ENCODE measurements at regions of chr14 and their contacts with region 1.

Region 1: GRCh38 chr14:44701563-44702263 is 194.6 kb upstream of the FSCB start:
- DNase-seq: peak; percentile 72
- ATAC-seq: peak; percentile 58
- H3K4me3 ChIP-seq: no peak overlapping the region
- H3K27ac ChIP-seq: no peak overlapping the region
- H3K4me1 ChIP-seq: peaks cover 27% of the 10 kb centered on the region
- H3K27me3 ChIP-seq: no peaks in the 10 kb centered on the region
- CTCF ChIP-seq: no peak

Region 2: GRCh38 chr14:44720707-44721106 is 19.0 kb after region 1 on chr14:
- CTCF ChIA-PET with region 1: no interaction called
- POLR2A ChIA-PET with region 1: interaction called, 3 read pairs
- intact Hi-C with region 1: loop called (anchors 2 kb)
- DNase-seq: peak; percentile 45
- ATAC-seq: peak; percentile 70
- H3K4me3 ChIP-seq: no peak overlapping the region
- H3K27ac ChIP-seq: no peak overlapping the region
- H3K4me1 ChIP-seq: no peaks in the 10 kb centered on the region
- H3K27me3 ChIP-seq: no peaks in the 10 kb centered on the region
- CTCF ChIP-seq: no peak

Region 3: DNA sequence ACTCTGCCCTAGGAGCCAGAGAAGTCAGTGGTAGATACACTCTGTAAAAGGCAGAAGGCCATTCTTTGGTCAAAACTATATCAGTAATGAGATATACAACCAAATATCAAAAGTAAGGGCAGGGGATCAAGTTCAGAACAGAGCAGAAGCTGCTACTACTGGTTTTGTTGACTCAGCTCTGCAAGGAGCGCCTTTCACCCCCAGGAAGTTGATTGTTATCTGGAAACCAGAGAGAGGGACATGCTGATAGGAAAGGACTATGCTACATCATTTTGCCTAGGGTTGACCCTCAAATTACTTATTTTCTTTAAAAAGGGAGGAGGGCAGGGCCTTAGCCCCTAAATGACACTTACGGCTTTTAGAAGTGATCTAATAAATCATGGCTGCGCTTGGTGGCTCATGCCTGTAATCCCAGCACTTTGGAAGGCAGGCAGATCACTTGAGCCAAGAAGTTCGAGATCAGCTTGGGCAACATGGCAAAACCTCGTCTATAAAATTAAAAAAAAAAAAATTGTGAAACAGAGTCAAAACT is 66.0 kb after region 1 on chr14:
- CTCF ChIA-PET with region 1: no interaction called
- POLR2A ChIA-PET with region 1: no interaction called
- intact Hi-C with region 1: no loop called
- DNase-seq: peak; percentile 13
- ATAC-seq: no peak
- H3K4me3 ChIP-seq: no peak overlapping the region
- H3K27ac ChIP-seq: no peak overlapping the region
- H3K4me1 ChIP-seq: peaks cover 6% of the 10 kb centered on the region
- H3K27me3 ChIP-seq: no peaks in the 10 kb centered on the region
- CTCF ChIP-seq: no peak

Region 4: GRCh38 chr14:44778604-44779003 is 76.9 kb after region 1 on chr14:
- CTCF ChIA-PET with region 1: no interaction called
- POLR2A ChIA-PET with region 1: no interaction called
- intact Hi-C with region 1: loop called (anchors 5 kb)
- DNase-seq: peak; percentile 55
- ATAC-seq: peak; percentile 62
- H3K4me3 ChIP-seq: no peak overlapping the region
- H3K27ac ChIP-seq: no peak overlapping the region
- H3K4me1 ChIP-seq: peaks cover 4% of the 10 kb centered on the region
- H3K27me3 ChIP-seq: no peaks in the 10 kb centered on the region
- CTCF ChIP-seq: no peak

Region 5: GRCh38 chr14:44795725-44796124 is 94.0 kb after region 1 on chr14:
- CTCF ChIA-PET with region 1: no interaction called
- POLR2A ChIA-PET with region 1: no interaction called
- intact Hi-C with region 1: loop called (anchors 1 kb)
- DNase-seq: peak; percentile 75
- ATAC-seq: peak; percentile 94
- H3K4me3 ChIP-seq: no peak overlapping the region
- H3K27ac ChIP-seq: no peak overlapping the region
- H3K4me1 ChIP-seq: 0 out of 2 replicates have a peak, but pooled peaks cover 13% of the 10 kb centered on the region
- H3K27me3 ChIP-seq: no peaks in the 10 kb centered on the region
- CTCF ChIP-seq: no peak